H1 (cell line): ENCODE measurements at regions of chr3 and their contacts with region 1.

Region 1: DNA sequence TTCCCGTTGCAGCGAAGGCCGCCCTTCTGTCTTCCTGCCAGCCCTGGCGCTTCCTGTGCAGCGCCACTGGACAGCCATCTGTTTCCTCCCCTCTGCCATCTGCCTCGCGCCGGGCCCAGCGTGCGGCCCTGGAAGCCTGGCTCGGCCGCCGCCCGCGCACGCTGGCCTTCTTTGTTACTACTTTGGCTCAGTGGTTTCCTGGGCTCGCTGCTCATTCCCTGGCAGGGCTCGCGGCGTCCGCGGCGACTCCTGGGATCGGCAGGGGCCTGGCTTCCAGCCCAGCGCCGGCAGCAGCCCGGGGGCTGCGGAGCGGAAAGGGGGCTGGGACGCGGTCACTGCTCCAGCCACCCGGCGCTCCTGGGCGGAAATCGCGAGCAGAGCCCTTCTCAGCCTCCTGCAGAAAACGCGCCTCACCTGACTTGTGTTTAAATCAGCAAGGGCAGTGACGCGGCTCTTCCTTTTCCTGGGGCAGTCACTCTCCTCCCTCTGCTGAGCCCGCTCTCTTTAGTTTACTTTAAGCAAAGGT is 10.0 kb downstream of the CMTM7 start:
- DNase-seq: peak in 1 of 2 experiments; percentile 80
- H3K4me3 ChIP-seq: peak overlapping the region; percentile 19 to 51 (median 34)
- H3K27ac ChIP-seq: peak overlapping the region; percentile 49; the same call in 1 of the 2 replicates
- H3K4me1 ChIP-seq: peaks cover 2 to 5% (median 4%) of the 10 kb centered on the region in 4 experiments; a peak in 6 of 7 replicates
- H3K27me3 ChIP-seq: no peaks in the 10 kb centered on the region
- CTCF ChIP-seq: no peak
- EP300 ChIP-seq: no peak
- POLR2A ChIP-seq: peak in 1 of 2 experiments; percentile 81; a peak in 2 of 3 replicates
- RAD21 ChIP-seq: no peak; a peak in 1 of 4 replicates

Region 2: GRCh38 chr3:32384938-32385337 is 16.7 kb before region 1 on chr3:
- CTCF ChIA-PET with region 1: interaction called, 11 read pairs
- POLR2A ChIA-PET with region 1: no interaction called
- DNase-seq: no peak
- H3K4me3 ChIP-seq: no peak overlapping the region
- H3K27ac ChIP-seq: no peak overlapping the region
- H3K4me1 ChIP-seq: no peaks in the 10 kb centered on the region
- H3K27me3 ChIP-seq: 0 out of 7 replicates have a peak, but pooled peaks cover 0 to 1% (median 0%) of the 10 kb centered on the region in 4 experiments
- CTCF ChIP-seq: no peak
- EP300 ChIP-seq: no peak
- POLR2A ChIP-seq: no peak
- RAD21 ChIP-seq: no peak